ENCODE measurements at regions of chr17 and their contacts with region 1.

Region 1: GRCh38 chr17:74987418-74987908 is at the start of gene CDR2L:
- DNase-seq: peak; percentile 97

Region 2: GRCh38 chr17:74972107-74972972 is 15.1 kb before region 1 on chr17 and contains the start of gene HID1:
- CTCF ChIA-PET with region 1: interaction called, 10 read pairs
- POLR2A ChIA-PET with region 1: interaction called, 47 read pairs
- DNase-seq: peak; percentile 93

Region 3: DNA sequence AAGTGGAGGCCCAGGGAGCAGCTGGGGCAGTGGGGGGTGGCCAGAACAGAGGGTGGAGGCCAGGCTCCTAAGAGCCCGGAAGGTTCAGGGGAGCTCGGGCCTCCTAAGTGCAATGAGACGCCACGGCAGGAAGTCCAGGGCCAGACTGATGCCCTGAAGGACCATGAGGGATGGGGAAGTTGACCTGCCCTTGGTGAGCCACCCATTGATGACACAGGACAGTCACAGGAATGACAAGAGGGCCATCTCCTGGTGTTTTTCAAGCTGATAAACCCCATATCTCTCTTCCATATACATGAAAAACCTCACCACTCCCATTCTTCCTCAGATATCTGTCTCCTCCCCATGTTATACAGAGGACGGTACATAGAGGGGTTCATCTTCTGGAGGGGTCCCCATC is 19.2 kb after region 1 on chr17:
- CTCF ChIA-PET with region 1: interaction called, 4 read pairs
- POLR2A ChIA-PET with region 1: interaction called, 169 read pairs
- DNase-seq: no peak

Region 4: GRCh38 chr17:75096082-75096625 is 108.7 kb after region 1 on chr17:
- CTCF ChIA-PET with region 1: no interaction called
- POLR2A ChIA-PET with region 1: no interaction called
- DNase-seq: no peak

Region 5: GRCh38 chr17:75250009-75250471 is 262.6 kb after region 1 on chr17:
- CTCF ChIA-PET with region 1: no interaction called
- POLR2A ChIA-PET with region 1: no interaction called
- DNase-seq: no peak

Measured in HEK293T (cell line).